Activated B cell treated with CpG ODN at 0.5 μM for 24 hours (primary cell): ENCODE measurements at regions of chr1 and their contacts with region 1.

Region 1: GRCh38 chr1:94926915-94927404 is at the start of gene CNN3:
- DNase-seq: peak; percentile 74
- ATAC-seq: peak; percentile 87
- H3K4me3 Mint-ChIP-seq: peak within 1 kb of the TSS; percentile 86
- H3K27ac Mint-ChIP-seq: peak within 1 kb of the TSS; percentile 86
- H3K4me1 Mint-ChIP-seq: peaks cover 30% of the 10 kb centered on the region
- H3K27me3 Mint-ChIP-seq: peaks cover 15% of the 10 kb centered on the region
- CTCF ChIP-seq: no peak
- total RNA-seq, gene CNN3: 6.2 and 11.8 TPM in 2 replicates

Region 2: GRCh38 chr1:92975551-92976232 is 1951.3 kb before region 1 on chr1:
- CTCF ChIA-PET with region 1: no interaction called
- POLR2A ChIA-PET with region 1: no interaction called
- intact Hi-C with region 1: loop called (anchors 10 kb)
- DNase-seq: peak; percentile 48
- ATAC-seq: peak; percentile 73
- H3K4me3 Mint-ChIP-seq: peak overlapping the region; percentile 67
- H3K27ac Mint-ChIP-seq: peak overlapping the region; percentile 99
- H3K4me1 Mint-ChIP-seq: peaks cover 91% of the 10 kb centered on the region
- H3K27me3 Mint-ChIP-seq: no peaks in the 10 kb centered on the region
- CTCF ChIP-seq: no peak

Region 3: DNA sequence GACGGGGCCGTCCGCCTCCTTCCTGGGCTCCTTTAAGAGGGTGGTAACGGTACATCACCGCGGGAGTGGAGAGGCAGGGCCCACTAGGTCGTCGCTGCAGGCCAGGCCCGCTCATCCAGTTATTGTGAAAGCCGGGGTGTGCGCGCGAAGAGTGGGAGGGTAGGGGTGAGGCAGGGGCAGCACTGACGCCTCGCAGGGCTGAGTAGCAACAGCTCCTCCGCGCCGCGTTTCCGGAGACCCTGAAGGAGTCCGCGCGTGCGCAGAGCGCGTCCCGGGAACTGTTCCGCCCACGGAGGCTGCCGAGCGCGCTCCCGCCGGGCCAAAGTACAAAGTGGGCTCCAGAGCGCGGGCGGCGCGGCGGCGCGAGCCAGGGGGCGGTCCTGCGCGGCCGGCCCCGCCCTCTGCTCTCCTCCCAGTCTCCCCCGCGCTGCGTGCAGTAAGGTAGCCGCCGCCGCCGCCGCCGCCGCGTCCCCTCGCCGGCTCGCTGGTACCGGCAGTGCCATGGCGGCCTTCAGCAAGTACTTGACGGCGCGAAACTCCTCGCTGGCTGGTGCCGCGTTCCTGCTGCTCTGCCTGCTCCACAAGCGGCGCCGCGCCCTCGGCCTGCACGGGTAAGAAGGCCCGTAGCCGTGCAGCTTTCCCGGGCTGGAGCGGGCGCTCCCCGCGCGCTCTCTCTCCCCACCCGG is 508.8 kb before region 1 on chr1 and contains the start of gene ABCD3:
- CTCF ChIA-PET with region 1: no interaction called
- POLR2A ChIA-PET with region 1: no interaction called
- intact Hi-C with region 1: loop called (anchors 5 kb)
- DNase-seq: peak; percentile 97
- ATAC-seq: peak; percentile 95
- H3K4me3 Mint-ChIP-seq: no peak within 1 kb of the TSS
- H3K27ac Mint-ChIP-seq: no peak within 1 kb of the TSS
- H3K4me1 Mint-ChIP-seq: peaks cover 17% of the 10 kb centered on the region
- H3K27me3 Mint-ChIP-seq: no peaks in the 10 kb centered on the region
- CTCF ChIP-seq: no peak
- total RNA-seq, gene ABCD3: 20.8 and 23.2 TPM in 2 replicates

Region 4: DNA sequence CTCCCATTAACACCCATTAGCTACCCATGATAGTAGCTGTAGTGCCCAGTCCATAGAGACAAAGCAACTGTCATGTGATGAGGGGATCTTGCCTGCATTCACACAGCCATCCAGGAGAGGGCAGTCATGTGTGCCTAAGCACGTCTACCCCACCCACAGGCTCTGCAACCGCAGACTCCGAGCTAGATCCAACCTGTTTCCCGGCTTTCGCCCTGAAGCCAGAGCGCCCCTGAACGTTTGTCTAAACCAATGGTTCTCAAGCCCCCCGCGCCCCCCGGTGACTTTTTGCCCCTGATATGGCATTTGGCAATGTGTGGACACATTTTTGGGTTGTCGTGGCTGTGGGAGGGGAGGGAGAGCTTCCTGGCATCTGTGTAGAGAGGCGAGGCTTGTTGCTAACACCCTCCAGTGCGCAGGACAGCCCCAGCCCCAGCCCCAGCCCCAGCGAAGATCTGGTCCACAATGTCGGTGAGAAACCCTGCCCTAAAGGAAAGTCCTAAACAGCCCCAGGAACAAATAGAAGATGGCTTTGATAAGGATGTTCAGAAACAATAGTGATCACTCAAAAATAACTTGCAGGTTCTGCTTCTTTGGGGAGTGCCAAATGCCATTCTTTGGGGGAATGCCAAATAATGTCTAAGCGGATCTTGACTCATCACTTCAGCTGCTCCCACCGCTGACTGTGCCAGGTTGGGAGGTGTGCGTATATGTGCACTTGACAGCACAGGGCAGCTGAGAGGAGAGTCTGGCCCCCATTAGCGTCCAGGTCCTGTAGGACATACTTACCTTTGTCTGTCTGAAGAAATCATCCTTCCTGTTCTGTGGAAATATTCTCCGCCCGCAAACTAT is 72.3 kb before region 1 on chr1:
- CTCF ChIA-PET with region 1: interaction called, 3 read pairs
- POLR2A ChIA-PET with region 1: interaction called, 3 read pairs
- intact Hi-C with region 1: loop called (anchors 1 kb)
- DNase-seq: peak; percentile 54
- ATAC-seq: peak; percentile 98
- H3K4me3 Mint-ChIP-seq: no peak overlapping the region
- H3K27ac Mint-ChIP-seq: no peak overlapping the region
- H3K4me1 Mint-ChIP-seq: no peaks in the 10 kb centered on the region
- H3K27me3 Mint-ChIP-seq: peaks cover 8% of the 10 kb centered on the region
- CTCF ChIP-seq: no peak

Region 5: DNA sequence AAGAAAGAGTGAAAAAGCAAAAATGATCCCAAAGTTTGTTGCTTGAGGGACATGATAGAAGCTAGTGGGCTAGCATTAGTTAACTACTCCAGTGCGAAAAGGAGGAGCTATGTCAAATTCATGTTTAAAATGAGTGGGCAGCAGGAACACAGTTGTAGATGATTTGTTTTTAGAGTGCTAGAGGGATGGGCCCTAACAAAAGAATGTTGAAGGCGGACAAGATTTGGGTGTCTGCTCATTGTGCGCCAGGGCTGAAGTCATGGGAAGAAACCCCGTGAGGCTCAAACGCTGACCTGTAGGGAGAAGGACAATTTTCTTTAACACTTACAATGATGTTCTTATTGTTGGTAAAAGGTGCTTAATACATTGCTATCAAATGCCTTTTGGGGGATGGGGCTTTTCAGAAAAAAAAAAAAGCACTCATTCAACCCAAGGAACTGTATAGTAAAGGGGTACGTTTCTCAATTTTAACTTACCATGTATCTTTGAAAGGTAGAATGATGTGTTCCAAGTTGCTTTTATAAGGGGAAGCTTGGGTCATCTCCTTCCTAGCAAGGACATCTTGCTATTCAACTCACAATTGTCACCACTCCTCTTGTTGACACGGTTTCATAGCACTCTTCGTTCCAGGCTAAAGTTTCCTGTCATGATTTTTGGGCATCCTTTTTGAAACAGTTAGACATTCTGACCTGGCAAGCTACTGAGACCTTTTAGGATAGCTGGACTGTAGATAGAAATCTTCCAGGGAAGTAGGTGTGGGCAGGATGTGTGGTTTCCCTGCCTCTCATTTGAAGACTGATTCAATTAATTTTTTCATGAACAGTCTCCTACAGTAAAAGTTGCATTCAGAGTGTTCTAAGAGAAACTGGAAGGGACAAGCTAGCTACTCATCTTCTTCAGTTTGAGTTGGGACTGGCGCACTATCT is 53.0 kb after region 1 on chr1:
- CTCF ChIA-PET with region 1: no interaction called
- POLR2A ChIA-PET with region 1: no interaction called
- intact Hi-C with region 1: loop called (anchors 1 kb)
- DNase-seq: no peak
- ATAC-seq: no peak
- H3K4me3 Mint-ChIP-seq: peak overlapping the region; percentile 9
- H3K27ac Mint-ChIP-seq: peak overlapping the region; percentile 51
- H3K4me1 Mint-ChIP-seq: peaks cover 49% of the 10 kb centered on the region
- H3K27me3 Mint-ChIP-seq: no peaks in the 10 kb centered on the region
- CTCF ChIP-seq: no peak

Region 6: GRCh38 chr1:95072532-95073419 is 145.8 kb after region 1 on chr1 and contains the start of gene ALG14:
- CTCF ChIA-PET with region 1: no interaction called
- POLR2A ChIA-PET with region 1: interaction called, 3 read pairs
- intact Hi-C with region 1: loop called (anchors 1 kb)
- DNase-seq: peak; percentile 88
- ATAC-seq: peak; percentile 96
- H3K4me3 Mint-ChIP-seq: peak within 1 kb of the TSS; percentile 100
- H3K27ac Mint-ChIP-seq: peak within 1 kb of the TSS; percentile 99
- H3K4me1 Mint-ChIP-seq: peaks cover 20% of the 10 kb centered on the region
- H3K27me3 Mint-ChIP-seq: peaks cover 3% of the 10 kb centered on the region
- CTCF ChIP-seq: no peak
- total RNA-seq, gene ALG14: 3.7 and 7.5 TPM in 2 replicates